ENCODE measurements at regions of chr22 and their contacts with region 1.

Region 1: GRCh38 chr22:38872172-38872830 is at the start of gene CBX6:
- DNase-seq: peak; percentile 97 to 99
- ATAC-seq: peak; percentile 92
- H3K4me3 ChIP-seq: peak within 1 kb of the TSS; percentile 91 to 94
- H3K27ac ChIP-seq: peak within 1 kb of the TSS; percentile 50 to 92
- H3K4me1 ChIP-seq: no peaks in the 10 kb centered on the region
- H3K27me3 ChIP-seq: no peaks in the 10 kb centered on the region
- total RNA-seq, gene CBX6: 97.2 to 104 TPM

Region 2: GRCh38 chr22:38927033-38927781 is 54.9 kb after region 1 on chr22:
- intact Hi-C with region 1: loop called (anchors 2 to 5 kb)
- DNase-seq: peak; percentile 87 to 92
- ATAC-seq: peak; percentile 69
- H3K4me3 ChIP-seq: peak overlapping the region in 1 of 2 donors; percentile 36
- H3K27ac ChIP-seq: peak overlapping the region in 1 of 2 donors; percentile 21
- H3K4me1 ChIP-seq: no peaks in the 10 kb centered on the region
- H3K27me3 ChIP-seq: no peaks in the 10 kb centered on the region

Region 3: GRCh38 chr22:39055658-39056057 is 183.4 kb after region 1 on chr22:
- intact Hi-C with region 1: no loop called
- DNase-seq: no peak
- ATAC-seq: no peak
- H3K4me3 ChIP-seq: no peak overlapping the region
- H3K27ac ChIP-seq: no peak overlapping the region
- H3K4me1 ChIP-seq: no peaks in the 10 kb centered on the region
- H3K27me3 ChIP-seq: no peaks in the 10 kb centered on the region

Region 4: DNA sequence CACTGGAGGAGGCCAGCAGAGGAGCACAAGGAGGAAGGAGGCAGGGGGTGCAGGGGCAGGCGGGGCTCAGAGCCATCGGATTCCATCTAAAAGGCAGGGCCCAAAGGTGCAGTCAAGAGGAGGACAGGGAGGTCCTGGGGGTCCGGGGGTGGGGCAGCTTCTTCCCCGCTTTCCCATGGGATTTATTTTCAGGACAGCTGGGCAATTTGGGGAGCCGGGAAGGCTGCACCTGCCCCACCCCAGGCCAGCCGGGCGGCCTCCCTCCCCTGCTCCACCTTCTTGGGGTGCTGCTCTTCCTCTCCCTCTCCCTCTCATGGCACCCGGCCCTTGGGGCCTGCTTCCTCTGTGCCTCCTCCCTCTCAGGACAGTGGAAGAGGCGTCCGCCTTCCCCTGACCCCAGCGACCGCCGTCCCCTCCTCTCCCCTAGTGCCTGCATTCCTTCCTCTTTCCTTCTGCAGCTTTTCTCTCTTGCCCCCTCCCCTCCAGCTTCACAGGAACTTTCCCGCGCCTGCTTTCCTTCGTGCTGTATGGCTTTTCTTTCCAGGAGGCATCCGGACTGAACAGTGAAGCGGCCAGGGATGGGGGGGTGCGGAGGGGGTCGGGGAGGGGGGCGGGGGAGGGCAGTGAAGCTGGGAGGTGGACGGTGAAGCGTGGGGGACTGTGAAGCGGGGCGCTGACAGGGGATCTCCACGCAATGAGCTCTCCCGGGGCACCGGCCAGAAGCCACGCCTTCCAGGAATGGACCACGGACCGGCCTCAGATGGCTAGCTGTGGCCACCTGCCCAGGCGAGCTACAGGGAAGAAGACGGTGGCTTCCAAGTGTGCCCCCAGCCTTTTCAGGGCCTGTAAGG is 251.7 kb after region 1 on chr22:
- intact Hi-C with region 1: loop called (anchors 5 kb)
- DNase-seq: no peak
- ATAC-seq: no peak
- H3K4me3 ChIP-seq: no peak overlapping the region
- H3K27ac ChIP-seq: no peak overlapping the region
- H3K4me1 ChIP-seq: no peaks in the 10 kb centered on the region
- H3K27me3 ChIP-seq: no peaks in the 10 kb centered on the region

Region 5: GRCh38 chr22:39319270-39320022 is 447.1 kb after region 1 on chr22 and contains the start of gene RPL3:
- intact Hi-C with region 1: loop called (anchors 10 kb)
- DNase-seq: peak; percentile 97 to 99
- ATAC-seq: peak; percentile 97
- H3K4me3 ChIP-seq: peak within 1 kb of the TSS; percentile 50 to 89
- H3K27ac ChIP-seq: peak within 1 kb of the TSS; percentile 57 to 94
- H3K4me1 ChIP-seq: no peaks in the 10 kb centered on the region
- H3K27me3 ChIP-seq: no peaks in the 10 kb centered on the region
- total RNA-seq, gene RPL3: 1,469 to 1,615 TPM

Region 6: GRCh38 chr22:39446295-39446721 is 574.0 kb after region 1 on chr22:
- intact Hi-C with region 1: no loop called
- DNase-seq: no peak
- ATAC-seq: no peak
- H3K4me3 ChIP-seq: no peak overlapping the region
- H3K27ac ChIP-seq: no peak overlapping the region
- H3K4me1 ChIP-seq: no peaks in the 10 kb centered on the region
- H3K27me3 ChIP-seq: no peaks in the 10 kb centered on the region